ENCODE measurements at regions of chr5 and their contacts with region 1.

Region 1: GRCh38 chr5:132007399-132008165 is 3.9 kb downstream of the ACSL6 start:
- DNase-seq: peak; percentile 83

Region 2: DNA sequence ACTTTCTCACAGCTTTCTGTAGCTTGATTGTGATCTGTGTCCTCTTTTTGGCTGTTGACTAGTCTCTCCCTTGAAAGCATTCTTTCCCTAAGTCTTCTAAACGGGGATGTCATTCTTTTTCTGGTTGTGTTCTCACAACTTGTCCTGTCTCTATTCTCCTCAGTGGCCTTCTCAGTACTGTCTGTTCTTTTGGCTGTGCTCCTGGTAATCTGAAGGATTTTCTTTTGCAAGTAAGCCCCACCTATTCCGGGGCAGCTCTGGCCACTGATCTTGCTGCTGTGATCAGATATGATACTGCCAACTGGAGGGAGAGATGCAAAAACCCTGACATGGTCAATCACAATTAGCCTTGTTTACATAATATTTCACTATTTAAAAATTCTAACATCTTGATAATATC is 571.5 kb before region 1 on chr5:
- in situ Hi-C with region 1: loop called (anchors 25 kb)
- DNase-seq: no peak

Region 3: GRCh38 chr5:131610198-131611063 is 397.2 kb before region 1 on chr5:
- in situ Hi-C with region 1: loop called (anchors 25 kb)
- DNase-seq: no peak

Region 4: DNA sequence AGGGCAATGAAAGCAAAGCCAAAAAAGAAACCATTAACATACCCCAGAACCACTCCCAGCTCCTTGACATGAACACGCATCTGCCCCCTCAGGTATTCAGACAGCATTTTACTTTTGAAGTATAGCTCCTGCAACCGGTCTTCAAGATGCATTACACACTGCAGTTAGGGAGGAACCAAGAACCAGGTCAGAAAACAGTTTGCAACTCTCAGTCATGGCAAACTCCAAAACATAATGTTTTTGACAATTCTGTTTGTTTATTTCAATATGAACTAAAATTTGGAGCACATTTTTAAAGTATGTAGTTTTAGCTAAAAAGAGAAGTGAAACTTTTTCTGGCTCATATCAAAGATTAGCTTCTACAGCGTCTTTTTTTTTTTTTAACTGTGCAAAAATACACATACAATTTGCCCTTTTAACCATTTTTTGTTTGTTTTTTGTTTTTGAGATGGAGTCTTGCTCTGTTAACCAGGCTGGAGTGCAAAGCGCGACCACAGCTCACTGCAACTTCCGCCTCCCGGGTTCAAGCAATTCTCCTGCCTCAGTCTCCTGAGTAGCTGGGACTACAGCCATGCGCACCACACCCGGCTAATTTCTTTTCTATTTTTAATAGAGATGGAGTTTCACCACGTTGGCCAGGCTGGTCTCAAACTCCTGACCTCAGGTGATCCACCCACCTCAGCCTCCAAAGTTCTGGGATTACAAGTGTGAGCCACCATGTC is 360.4 kb before region 1 on chr5:
- in situ Hi-C with region 1: no loop called
- DNase-seq: no peak

Region 5: DNA sequence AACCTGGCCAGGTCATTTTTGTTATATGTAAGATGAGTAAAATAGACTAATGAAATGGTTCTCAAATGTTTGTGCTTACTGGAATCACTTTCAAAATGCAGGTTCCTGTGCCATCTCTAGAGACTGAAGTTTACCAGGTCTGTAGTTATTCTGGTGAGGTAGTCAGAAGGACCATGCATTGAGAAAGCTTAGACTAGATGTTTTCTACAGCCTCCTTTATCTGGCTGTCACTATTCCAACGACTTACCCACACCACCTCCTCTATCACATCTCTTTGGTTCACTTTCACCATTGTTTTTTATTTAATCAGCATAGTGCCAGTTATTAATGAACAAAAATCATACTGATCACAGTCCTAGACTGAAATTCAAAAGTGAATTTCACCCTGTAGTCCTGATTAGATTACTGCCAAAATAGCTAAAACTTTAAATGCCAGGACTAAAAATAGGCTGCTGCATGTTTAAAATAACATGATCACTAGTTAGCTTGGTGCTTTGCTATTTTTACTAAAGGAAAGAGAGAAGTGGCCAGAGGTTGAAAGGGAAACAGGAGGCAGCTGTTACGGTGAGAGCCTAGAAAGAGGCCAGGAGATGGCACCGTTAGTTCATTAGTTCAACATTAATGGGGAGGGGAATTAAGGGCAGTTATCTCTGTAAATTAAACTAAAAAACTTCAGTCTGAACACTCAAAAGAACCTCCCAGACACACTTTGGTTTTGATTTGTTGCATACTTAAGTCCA is 196.9 kb before region 1 on chr5:
- in situ Hi-C with region 1: loop called (anchors 25 kb)
- DNase-seq: peak; percentile 52

Region 6: GRCh38 chr5:131899692-131900091 is 107.9 kb before region 1 on chr5:
- in situ Hi-C with region 1: no loop called
- DNase-seq: no peak